GM12878 (cell line): ENCODE measurements at regions of chr4 and their contacts with region 1.

Region 1: GRCh38 chr4:147866532-147867271 is 134.8 kb downstream of the ARHGAP10 start:
- DNase-seq: peak; percentile 66
- ATAC-seq: peak; percentile 94
- H3K4me3 ChIP-seq: no peak overlapping the region
- H3K27ac ChIP-seq: no peak overlapping the region
- H3K4me1 ChIP-seq: 0 out of 2 replicates have a peak, but pooled peaks cover 2% of the 10 kb centered on the region
- H3K27me3 ChIP-seq: no peaks in the 10 kb centered on the region
- CTCF ChIP-seq: peak; percentile 92 to 100 (median 99); a peak in 5 of 6 replicates
- EP300 ChIP-seq: no peak
- POLR2A ChIP-seq: no peak
- RAD21 ChIP-seq: peak; percentile 100

Region 2: GRCh38 chr4:147182041-147182440 is 684.7 kb before region 1 on chr4:
- CTCF ChIA-PET with region 1: no interaction called
- POLR2A ChIA-PET with region 1: no interaction called
- RAD21 ChIA-PET with region 1: no interaction called
- SMC1A ChIA-PET with region 1: no interaction called
- in situ Hi-C with region 1: no loop called
- intact Hi-C with region 1: no loop called
- DNase-seq: no peak
- ATAC-seq: no peak
- H3K4me3 ChIP-seq: no peak overlapping the region
- H3K27ac ChIP-seq: no peak overlapping the region
- H3K4me1 ChIP-seq: no peaks in the 10 kb centered on the region
- H3K27me3 ChIP-seq: no peaks in the 10 kb centered on the region; a peak in 2 of 4 replicates
- CTCF ChIP-seq: no peak
- EP300 ChIP-seq: no peak
- POLR2A ChIP-seq: no peak
- RAD21 ChIP-seq: no peak

Region 3: DNA sequence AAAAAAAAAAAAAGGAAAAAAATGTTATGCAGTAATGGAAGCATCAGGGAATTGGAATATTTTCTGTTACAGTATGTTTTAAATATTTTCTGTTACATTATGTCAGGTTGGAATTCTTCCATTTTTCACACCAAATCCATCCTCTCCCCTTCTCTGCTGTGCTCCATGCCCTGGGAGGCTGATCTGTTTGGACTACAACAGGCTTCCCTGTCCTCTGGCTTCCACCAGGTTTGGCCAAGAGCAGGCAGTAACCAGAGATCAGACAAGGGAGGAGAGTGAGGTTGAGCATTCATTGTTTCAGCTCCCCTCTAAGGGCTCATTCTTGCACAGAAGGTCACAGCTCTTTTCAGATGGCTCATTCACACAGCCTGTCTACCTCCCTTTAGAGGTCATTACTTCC is 261.2 kb before region 1 on chr4:
- CTCF ChIA-PET with region 1: interaction called, 105 read pairs
- POLR2A ChIA-PET with region 1: no interaction called
- RAD21 ChIA-PET with region 1: interaction called, 85 read pairs
- SMC1A ChIA-PET with region 1: interaction called, 11 read pairs
- in situ Hi-C with region 1: no loop called
- intact Hi-C with region 1: no loop called
- DNase-seq: no peak
- ATAC-seq: no peak; the same call in 2 of the 3 replicates
- H3K4me3 ChIP-seq: no peak overlapping the region
- H3K27ac ChIP-seq: no peak overlapping the region
- H3K4me1 ChIP-seq: no peaks in the 10 kb centered on the region
- H3K27me3 ChIP-seq: no peaks in the 10 kb centered on the region; a peak in 1 of 4 replicates
- CTCF ChIP-seq: no peak
- EP300 ChIP-seq: no peak
- POLR2A ChIP-seq: no peak
- RAD21 ChIP-seq: no peak

Region 4: GRCh38 chr4:147683717-147684700 is 182.7 kb before region 1 on chr4 and contains the start of gene PRMT9:
- CTCF ChIA-PET with region 1: interaction called, 44 read pairs
- POLR2A ChIA-PET with region 1: no interaction called
- RAD21 ChIA-PET with region 1: interaction called, 26 read pairs
- SMC1A ChIA-PET with region 1: interaction called, 28 read pairs
- in situ Hi-C with region 1: no loop called
- intact Hi-C with region 1: no loop called
- DNase-seq: peak; percentile 74
- ATAC-seq: peak; percentile 97
- H3K4me3 ChIP-seq: peak within 1 kb of the TSS; percentile 90
- H3K27ac ChIP-seq: peak within 1 kb of the TSS; percentile 65
- H3K4me1 ChIP-seq: peaks cover 3% of the 10 kb centered on the region
- H3K27me3 ChIP-seq: no peaks in the 10 kb centered on the region
- CTCF ChIP-seq: no peak
- EP300 ChIP-seq: peak; percentile 70 to 79; a peak in 3 of 4 replicates
- POLR2A ChIP-seq: peak; percentile 95
- RAD21 ChIP-seq: no peak
- polyA plus RNA-seq, gene PRMT9: 4.1 to 4.3 TPM

Region 5: DNA sequence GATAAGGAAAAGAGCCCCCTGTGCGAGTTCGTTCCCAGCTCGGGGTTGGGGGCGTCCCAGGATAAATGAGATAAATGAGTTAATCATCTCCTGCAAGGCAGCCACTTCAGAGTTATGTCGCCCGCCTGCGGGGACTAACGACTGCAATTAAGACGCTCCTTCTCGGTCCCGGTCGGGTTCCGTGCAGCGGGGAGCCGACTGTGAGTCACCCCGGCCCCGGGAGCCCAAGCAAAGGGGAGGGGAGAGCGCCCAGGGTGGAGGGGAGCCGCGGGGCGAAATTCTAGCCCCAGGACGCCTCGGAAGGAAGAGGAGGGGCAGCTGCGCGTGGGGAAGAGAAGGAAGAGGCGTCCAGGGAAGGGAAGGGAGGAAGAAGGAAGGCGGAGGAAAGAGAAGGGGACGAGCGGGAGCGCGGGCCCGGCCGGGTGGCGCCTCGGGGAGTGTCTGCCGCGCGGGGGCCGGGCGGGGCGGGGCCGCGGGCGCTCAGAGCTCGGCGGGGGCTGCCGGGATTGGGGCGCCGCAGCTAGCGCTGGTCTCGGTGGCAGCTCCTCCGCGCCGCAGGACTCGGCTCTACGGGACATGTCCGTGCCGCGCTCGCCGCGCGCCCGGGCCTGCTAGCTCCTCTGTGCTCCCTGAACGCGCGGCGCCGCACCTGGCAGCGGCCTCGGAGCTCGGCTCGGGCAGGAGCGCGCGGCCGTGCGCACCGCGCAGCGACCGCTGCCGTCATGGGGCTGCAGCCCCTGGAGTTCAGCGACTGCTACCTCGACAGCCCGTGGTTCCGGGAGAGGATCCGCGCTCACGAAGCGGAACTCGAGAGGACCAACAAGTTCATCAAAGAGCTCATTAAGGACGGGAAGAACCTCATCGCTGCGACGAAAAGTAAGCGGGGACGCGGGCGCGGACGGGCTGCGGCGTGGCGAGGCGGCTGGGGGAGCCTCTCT is 134.9 kb before region 1 on chr4 and contains the start of gene ARHGAP10:
- CTCF ChIA-PET with region 1: interaction called, 94 read pairs
- POLR2A ChIA-PET with region 1: interaction called, 6 read pairs
- RAD21 ChIA-PET with region 1: interaction called, 60 read pairs
- SMC1A ChIA-PET with region 1: interaction called, 42 read pairs
- in situ Hi-C with region 1: no loop called
- intact Hi-C with region 1: no loop called
- DNase-seq: no peak
- ATAC-seq: peak; percentile 71
- H3K4me3 ChIP-seq: peak within 1 kb of the TSS; percentile 98
- H3K27ac ChIP-seq: peak within 1 kb of the TSS; percentile 91
- H3K4me1 ChIP-seq: peaks cover 12% of the 10 kb centered on the region
- H3K27me3 ChIP-seq: no peaks in the 10 kb centered on the region
- CTCF ChIP-seq: no peak
- EP300 ChIP-seq: no peak
- POLR2A ChIP-seq: peak; percentile 78
- RAD21 ChIP-seq: no peak
- polyA plus RNA-seq, gene ARHGAP10: 1.3 to 4.5 TPM

Region 6: DNA sequence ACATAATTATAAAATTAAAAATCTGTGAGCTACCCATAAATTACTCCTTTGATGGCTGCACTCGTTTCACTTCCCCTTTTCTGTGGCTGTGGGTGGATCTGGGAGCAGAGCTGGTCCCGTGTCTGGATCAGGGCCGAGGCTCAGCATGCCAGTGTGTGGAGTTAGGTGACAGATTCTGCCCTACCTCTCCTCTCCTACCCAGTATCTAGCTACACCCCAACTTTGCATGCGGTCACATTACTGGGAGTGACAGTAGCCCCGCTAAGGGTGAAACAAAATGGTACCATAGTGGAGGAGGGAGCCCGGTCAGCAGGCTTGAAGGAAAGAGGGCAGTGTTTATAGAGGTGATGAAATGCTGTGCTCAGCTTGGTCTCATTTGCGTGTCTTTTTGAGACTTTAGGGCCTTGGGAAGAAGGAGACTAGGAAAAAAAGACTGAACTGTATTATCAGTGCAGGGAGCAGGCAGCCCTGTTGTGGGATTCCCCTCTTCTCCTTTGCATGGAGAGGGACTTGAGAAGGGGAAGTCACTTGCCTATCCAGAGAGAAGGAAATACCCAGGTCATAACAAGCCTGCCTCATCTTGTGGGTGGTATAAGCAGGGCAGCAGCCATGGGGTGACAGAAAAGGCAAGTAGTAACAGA is 86.4 kb before region 1 on chr4:
- CTCF ChIA-PET with region 1: interaction called, 81 read pairs
- POLR2A ChIA-PET with region 1: no interaction called
- RAD21 ChIA-PET with region 1: interaction called, 8 read pairs
- SMC1A ChIA-PET with region 1: interaction called, 33 read pairs
- in situ Hi-C with region 1: no loop called
- intact Hi-C with region 1: loop called (anchors 2 kb)
- DNase-seq: peak; percentile 86
- ATAC-seq: peak; percentile 84
- H3K4me3 ChIP-seq: peak overlapping the region; percentile 67; the same call in 1 of the 2 replicates
- H3K27ac ChIP-seq: peak overlapping the region; percentile 98
- H3K4me1 ChIP-seq: peaks cover 44% of the 10 kb centered on the region
- H3K27me3 ChIP-seq: no peaks in the 10 kb centered on the region
- CTCF ChIP-seq: no peak
- EP300 ChIP-seq: peak; percentile 8 to 61; a peak in 1 of 4 replicates
- POLR2A ChIP-seq: peak; percentile 71
- RAD21 ChIP-seq: no peak

Region 7: DNA sequence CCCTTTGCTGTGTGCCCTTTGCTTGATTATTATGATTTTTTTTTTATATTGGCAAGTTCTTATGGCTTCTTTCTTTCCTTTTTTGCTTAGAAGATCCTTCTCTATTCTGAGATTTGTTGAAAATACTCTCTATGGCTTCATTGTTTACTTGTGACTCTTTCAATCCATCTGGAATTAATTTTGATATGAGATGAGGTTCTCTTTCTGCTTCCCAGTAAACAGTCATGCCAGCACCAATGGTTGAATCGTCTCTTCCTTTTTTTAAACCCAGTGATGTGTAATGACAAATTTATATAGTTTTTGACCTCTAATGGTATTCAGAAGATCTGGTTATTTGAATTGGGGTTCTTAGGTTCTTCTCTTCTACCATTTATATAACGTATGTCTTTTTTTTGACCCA is 13.0 kb before region 1 on chr4:
- CTCF ChIA-PET with region 1: interaction called, 197 read pairs
- POLR2A ChIA-PET with region 1: interaction called, 6 read pairs
- RAD21 ChIA-PET with region 1: interaction called, 100 read pairs
- SMC1A ChIA-PET with region 1: interaction called, 87 read pairs
- in situ Hi-C with region 1: no loop called
- intact Hi-C with region 1: no loop called
- DNase-seq: no peak
- ATAC-seq: no peak
- H3K4me3 ChIP-seq: no peak overlapping the region
- H3K27ac ChIP-seq: no peak overlapping the region
- H3K4me1 ChIP-seq: no peaks in the 10 kb centered on the region
- H3K27me3 ChIP-seq: no peaks in the 10 kb centered on the region
- CTCF ChIP-seq: no peak
- EP300 ChIP-seq: no peak
- POLR2A ChIP-seq: no peak
- RAD21 ChIP-seq: no peak

Region 8: DNA sequence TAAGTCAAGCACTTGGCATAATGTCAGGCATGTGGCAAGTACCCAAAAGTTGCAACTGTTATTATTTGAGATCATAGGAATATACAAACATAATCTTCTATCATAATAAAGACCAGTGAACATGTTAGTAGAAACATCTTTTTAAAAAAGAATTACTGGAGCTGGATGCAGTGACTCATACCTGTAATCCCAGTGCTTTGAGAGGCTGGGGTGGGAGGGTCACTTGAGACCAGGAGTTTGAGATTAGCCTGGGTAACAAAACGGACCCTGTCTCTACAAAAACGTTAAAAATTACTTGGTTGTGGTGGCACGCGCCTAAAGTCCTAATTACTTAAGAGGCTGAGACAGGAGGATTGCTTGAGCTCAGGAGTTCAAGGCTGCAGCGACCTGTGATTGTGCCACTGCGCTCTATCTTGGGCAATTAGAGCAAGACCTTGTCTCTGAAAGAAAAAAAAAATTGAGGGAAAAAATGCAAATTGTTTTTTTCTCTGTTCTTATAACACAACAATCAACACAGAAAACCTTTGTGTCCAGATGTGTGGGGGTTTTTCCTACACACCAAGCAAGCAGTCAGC is 149.4 kb after region 1 on chr4:
- CTCF ChIA-PET with region 1: no interaction called
- POLR2A ChIA-PET with region 1: no interaction called
- RAD21 ChIA-PET with region 1: no interaction called
- SMC1A ChIA-PET with region 1: no interaction called
- in situ Hi-C with region 1: no loop called
- intact Hi-C with region 1: no loop called
- DNase-seq: no peak
- ATAC-seq: no peak
- H3K4me3 ChIP-seq: no peak overlapping the region
- H3K27ac ChIP-seq: no peak overlapping the region
- H3K4me1 ChIP-seq: peaks cover 5% of the 10 kb centered on the region
- H3K27me3 ChIP-seq: no peaks in the 10 kb centered on the region
- CTCF ChIP-seq: no peak
- EP300 ChIP-seq: no peak
- POLR2A ChIP-seq: no peak
- RAD21 ChIP-seq: no peak

Region 9: DNA sequence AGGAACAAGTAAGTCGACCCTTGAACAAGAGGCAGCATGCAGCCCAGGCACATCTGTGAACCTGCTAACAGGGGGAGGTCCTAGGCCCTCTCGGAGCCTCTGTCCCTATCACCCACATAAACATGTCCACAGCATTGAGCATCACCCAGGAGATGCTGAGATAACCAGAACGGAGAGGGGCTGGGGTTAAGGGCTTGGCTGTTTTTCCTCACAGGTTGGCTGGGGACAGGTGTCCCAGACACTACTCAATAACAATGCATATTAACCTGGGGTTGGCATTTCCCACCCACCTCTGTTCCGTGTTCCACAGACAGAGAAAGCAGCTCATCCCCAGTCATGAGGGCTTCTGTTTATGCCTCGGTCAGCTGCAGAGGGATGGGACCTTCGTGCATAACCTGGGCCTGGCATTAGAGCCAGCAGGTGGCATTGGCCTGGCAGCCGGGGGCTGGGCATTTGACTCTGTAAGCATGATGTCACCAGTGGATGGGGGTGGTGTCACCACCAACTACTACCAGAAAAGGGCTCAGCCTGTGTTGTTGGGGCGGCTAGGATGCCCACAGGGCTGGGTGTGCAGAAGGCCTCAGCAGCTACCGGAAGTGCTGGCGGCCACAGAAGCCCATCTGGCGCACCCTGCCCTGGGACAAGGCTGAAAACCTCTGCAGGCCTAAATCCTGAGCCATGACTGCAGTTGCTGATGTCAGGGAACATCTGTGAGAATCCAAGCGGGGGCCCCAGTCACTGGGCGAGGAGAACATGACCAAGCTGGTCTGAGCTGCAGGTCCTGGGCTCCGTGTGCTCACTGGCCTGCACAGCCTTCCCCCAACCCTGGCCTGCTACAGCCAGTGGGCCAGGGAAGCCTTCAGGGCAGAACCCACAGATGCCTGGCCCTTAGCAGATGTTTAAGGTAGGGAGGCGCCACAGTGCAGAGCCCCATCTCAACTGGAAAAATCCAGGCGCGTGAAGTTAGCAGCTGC is 224.1 kb after region 1 on chr4:
- CTCF ChIA-PET with region 1: no interaction called
- POLR2A ChIA-PET with region 1: no interaction called
- RAD21 ChIA-PET with region 1: no interaction called
- SMC1A ChIA-PET with region 1: no interaction called
- in situ Hi-C with region 1: no loop called
- intact Hi-C with region 1: no loop called
- DNase-seq: no peak
- ATAC-seq: peak; percentile 30
- H3K4me3 ChIP-seq: no peak overlapping the region
- H3K27ac ChIP-seq: no peak overlapping the region
- H3K4me1 ChIP-seq: no peaks in the 10 kb centered on the region
- H3K27me3 ChIP-seq: no peaks in the 10 kb centered on the region
- CTCF ChIP-seq: no peak
- EP300 ChIP-seq: no peak
- POLR2A ChIP-seq: no peak
- RAD21 ChIP-seq: no peak